Sigmoid colon (tissue), 7 donors: ENCODE measurements at regions of chr19 and their contacts with region 1.

Region 1: DNA sequence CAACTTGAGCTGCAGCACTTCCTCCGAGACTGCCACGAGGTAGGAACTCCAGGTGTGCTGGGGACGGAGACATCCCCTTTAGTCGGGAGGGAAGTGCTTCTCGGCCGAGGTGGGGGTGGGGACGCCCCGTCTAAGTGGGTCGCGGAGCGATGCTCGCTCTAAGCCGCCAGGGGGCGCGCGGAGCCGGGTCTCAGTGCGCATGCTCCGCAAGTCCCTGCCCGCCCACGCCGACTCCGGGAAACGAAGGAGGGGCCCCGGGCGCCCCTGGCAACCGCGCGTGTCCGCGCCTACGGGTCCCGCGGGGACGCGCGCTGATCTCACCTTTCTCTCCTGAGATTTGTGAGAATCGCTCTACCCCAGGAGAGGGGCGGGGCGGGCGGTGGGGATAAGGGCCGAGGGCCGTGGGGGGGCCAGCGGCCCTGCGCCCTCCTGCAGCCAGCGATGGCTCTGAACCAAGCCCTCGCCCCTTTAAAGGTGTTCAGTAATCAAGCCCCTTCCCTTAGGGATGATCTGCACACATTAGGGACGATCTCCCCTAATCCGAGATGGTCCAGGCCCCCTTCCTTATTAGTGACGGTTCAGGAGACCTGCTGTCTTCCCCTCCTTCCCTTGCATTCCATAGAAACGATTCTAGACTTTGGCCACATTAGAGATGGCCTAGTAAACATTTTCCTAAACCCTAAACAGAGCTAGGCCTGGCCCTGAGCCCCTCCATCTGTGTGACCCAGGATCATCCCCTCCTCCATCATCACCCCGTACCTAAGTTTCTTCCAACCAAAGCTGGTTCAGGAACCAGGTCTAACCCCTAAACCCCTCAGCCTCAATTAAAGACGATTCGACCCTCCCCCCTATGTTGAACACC is 47.3 kb upstream of the SHKBP1 start:
- DNase-seq: peak; percentile 92
- H3K4me3 ChIP-seq: peak overlapping the region; percentile 20 to 61 (median 56)
- H3K27ac ChIP-seq: peak overlapping the region in 3 of 4 donors; percentile 43 to 55 (median 52)
- H3K4me1 ChIP-seq: peaks cover 0 to 18% (median 15%) of the 10 kb centered on the region in 4 donors
- H3K27me3 ChIP-seq: peaks cover 0 to 6% (median 6%) of the 10 kb centered on the region in 3 donors
- CTCF ChIP-seq: peak; percentile 94 to 96 (median 94)
- EP300 ChIP-seq: no peak
- POLR2A ChIP-seq: no peak

Region 2: DNA sequence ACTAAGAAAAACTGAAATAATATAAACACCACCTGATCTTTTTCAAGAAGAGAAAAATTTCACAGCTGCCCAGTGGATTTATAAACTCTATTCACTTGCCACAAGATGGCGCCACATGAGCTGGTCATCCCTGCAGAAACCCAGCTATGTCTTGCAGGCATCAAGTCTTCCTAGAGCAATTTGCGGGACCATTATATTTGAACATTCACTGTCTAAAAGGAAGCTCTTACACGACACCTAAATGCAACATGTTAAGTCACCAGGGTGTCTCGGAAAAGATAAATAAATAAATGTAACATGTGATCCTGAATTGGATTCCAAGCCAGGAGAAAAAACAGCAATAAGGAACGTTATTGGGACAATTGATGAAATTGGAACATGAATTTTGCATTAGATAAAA is 223.9 kb before region 1 on chr19:
- intact Hi-C with region 1: loop called (anchors 10 kb)
- DNase-seq: peak; percentile 89
- H3K4me3 ChIP-seq: no peak overlapping the region
- H3K27ac ChIP-seq: no peak overlapping the region
- H3K4me1 ChIP-seq: peaks cover 0 to 3% (median 0%) of the 10 kb centered on the region in 4 donors
- H3K27me3 ChIP-seq: no peaks in the 10 kb centered on the region
- CTCF ChIP-seq: peak; percentile 40 to 62 (median 58)
- EP300 ChIP-seq: no peak
- POLR2A ChIP-seq: no peak

Region 3: DNA sequence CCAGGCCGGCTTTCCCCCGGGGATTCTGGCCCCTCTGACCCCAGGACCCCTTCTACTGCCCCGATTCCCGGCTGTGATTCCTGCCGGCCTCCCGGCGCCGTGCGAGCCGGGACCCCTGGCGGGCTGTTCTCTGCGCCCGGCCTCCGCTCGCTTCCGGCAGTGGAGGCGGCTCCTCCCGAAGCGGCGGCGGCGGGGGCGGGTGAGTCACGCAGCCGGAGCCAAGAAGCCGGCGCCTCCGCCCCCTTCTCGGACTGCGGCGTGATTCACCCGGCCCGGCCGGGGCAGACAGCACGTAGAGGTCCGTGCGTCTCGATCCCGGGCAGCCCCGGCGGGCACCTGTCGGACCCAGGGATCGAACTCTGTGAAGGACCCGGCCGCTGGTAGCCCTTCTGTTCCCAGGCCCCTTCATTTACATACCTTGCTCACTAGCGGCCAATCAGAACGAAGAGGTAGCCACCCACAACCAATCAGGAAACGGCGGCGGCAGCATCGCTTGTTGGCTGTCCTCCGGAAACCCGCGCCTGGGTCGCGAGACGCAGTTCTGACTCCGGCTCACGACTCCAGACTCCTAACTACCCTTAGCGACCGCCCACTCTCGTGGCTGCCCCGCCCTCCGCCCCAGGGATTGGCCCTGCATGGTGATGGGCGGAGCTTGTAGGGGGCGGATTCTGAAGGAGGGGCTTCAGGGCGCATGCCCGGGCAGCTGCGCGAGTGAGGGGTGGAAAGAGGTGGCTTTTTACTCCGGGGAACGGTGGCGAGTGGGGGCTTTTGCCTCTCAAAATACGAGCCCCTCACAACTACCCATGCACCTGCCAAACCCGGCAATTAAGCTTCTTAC is 103.7 kb before region 1 on chr19 and contains the start of gene SERTAD1:
- intact Hi-C with region 1: loop called (anchors 5 kb)
- DNase-seq: peak; percentile 100
- H3K4me3 ChIP-seq: peak within 1 kb of the TSS; percentile 61 to 98 (median 86)
- H3K27ac ChIP-seq: peak within 1 kb of the TSS; percentile 95 to 100 (median 99)
- H3K4me1 ChIP-seq: peaks cover 0 to 47% (median 37%) of the 10 kb centered on the region in 4 donors
- H3K27me3 ChIP-seq: no peaks in the 10 kb centered on the region
- CTCF ChIP-seq: peak; percentile 64 to 93 (median 88)
- EP300 ChIP-seq: no peak
- POLR2A ChIP-seq: peak; percentile 94 to 98
- total RNA-seq, gene SERTAD1: 10.2 to 29.2 (median 15.7) TPM

Region 4: GRCh38 chr19:40465557-40466150 is 63.7 kb before region 1 on chr19 and contains the start of gene BLVRB:
- intact Hi-C with region 1: loop called (anchors 5 kb)
- DNase-seq: peak; percentile 100
- H3K4me3 ChIP-seq: peak within 1 kb of the TSS; percentile 59 to 87 (median 70)
- H3K27ac ChIP-seq: peak within 1 kb of the TSS; percentile 88 to 96 (median 92)
- H3K4me1 ChIP-seq: peaks cover 0 to 46% (median 36%) of the 10 kb centered on the region in 4 donors
- H3K27me3 ChIP-seq: no peaks in the 10 kb centered on the region
- CTCF ChIP-seq: no peak
- EP300 ChIP-seq: no peak
- POLR2A ChIP-seq: peak; percentile 58 to 92
- total RNA-seq, gene BLVRB: 115 to 232 (median 210) TPM

Region 5: DNA sequence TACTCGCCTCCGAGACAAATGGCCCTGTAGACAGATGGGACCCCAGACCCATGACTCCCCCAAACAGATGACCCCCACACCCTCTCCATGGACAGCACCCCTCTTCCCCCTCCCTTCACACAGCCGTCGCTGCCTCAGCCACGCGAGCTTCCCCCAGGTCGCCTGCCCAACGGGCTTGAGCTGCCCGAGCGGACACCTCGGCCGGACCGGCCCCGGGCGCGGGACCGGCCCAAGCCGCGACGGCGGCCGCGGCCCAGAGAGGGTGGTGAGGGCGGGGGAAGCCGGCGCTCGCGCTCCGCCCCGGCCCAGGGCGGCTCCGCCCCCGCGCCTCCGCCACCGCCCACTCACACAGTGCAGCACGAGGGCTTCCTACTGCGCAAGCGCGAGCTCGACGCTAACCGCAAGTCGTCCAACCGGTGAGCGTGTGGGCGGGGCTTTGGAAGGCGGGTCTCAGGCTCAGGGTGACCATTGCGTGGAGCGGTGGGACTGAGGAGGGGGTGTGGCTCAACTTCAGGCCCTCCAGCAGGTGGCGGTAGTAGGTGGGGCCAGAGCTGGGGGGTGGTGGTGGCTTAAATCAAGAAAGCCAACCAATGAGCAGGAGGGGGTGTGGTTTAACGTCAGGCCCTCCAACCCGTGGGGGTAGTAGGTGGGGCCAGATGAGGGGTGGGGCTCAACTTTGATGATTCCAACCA is 41.1 kb after region 1 on chr19:
- intact Hi-C with region 1: loop called (anchors 2 kb)
- DNase-seq: peak; percentile 100
- H3K4me3 ChIP-seq: peak overlapping the region in 3 of 4 donors; percentile 34 to 48 (median 47)
- H3K27ac ChIP-seq: peak overlapping the region; percentile 56 to 68 (median 64)
- H3K4me1 ChIP-seq: peaks cover 0 to 18% (median 13%) of the 10 kb centered on the region in 4 donors
- H3K27me3 ChIP-seq: peaks cover 14 to 35% (median 27%) of the 10 kb centered on the region in 3 donors
- CTCF ChIP-seq: peak in 1 of 4 experiments; percentile 22
- EP300 ChIP-seq: no peak
- POLR2A ChIP-seq: no peak

Region 6: GRCh38 chr19:40598121-40598917 is 69.0 kb after region 1 on chr19:
- intact Hi-C with region 1: loop called (anchors 1 kb)
- DNase-seq: peak; percentile 95
- H3K4me3 ChIP-seq: peak overlapping the region in 2 of 4 donors; percentile 14 to 38
- H3K27ac ChIP-seq: peak overlapping the region; percentile 5 to 85 (median 23)
- H3K4me1 ChIP-seq: peaks cover 0 to 65% (median 62%) of the 10 kb centered on the region in 4 donors
- H3K27me3 ChIP-seq: peaks cover 9 to 48% (median 47%) of the 10 kb centered on the region in 3 donors
- CTCF ChIP-seq: peak; percentile 93 to 97 (median 94)
- EP300 ChIP-seq: no peak
- POLR2A ChIP-seq: no peak

Region 7: GRCh38 chr19:40640744-40641143 is 111.4 kb after region 1 on chr19:
- intact Hi-C with region 1: loop called (anchors 2 kb)
- DNase-seq: peak; percentile 71
- H3K4me3 ChIP-seq: no peak overlapping the region
- H3K27ac ChIP-seq: peak overlapping the region; percentile 46 to 70 (median 56)
- H3K4me1 ChIP-seq: peaks cover 0 to 23% (median 17%) of the 10 kb centered on the region in 4 donors
- H3K27me3 ChIP-seq: no peaks in the 10 kb centered on the region
- CTCF ChIP-seq: no peak
- EP300 ChIP-seq: no peak
- POLR2A ChIP-seq: no peak